Dorsolateral prefrontal cortex (tissue), 120 donors: ENCODE measurements at regions of chr17 and their contacts with region 1.

Region 1: GRCh38 chr17:43576563-43577229 is 30.6 kb upstream of the ETV4 start:
- DNase-seq: peak; percentile 48 to 81 (median 66)
- H3K4me3 ChIP-seq: no peak overlapping the region
- H3K27ac ChIP-seq: no peak overlapping the region
- H3K27me3 ChIP-seq: no peaks in the 10 kb centered on the region
- CTCF ChIP-seq: peak; percentile 82 to 99 (median 96)

Region 2: GRCh38 chr17:43528349-43528987 is 48.2 kb before region 1 on chr17:
- intact Hi-C with region 1: loop called in 1 of 2 experiments (anchors 5 kb)
- DNase-seq: peak in 3 of 10 donors; percentile 44 to 50 (median 46)
- H3K4me3 ChIP-seq: no peak overlapping the region
- H3K27ac ChIP-seq: no peak overlapping the region
- H3K27me3 ChIP-seq: no peaks in the 10 kb centered on the region
- CTCF ChIP-seq: no peak

Region 3: GRCh38 chr17:43540821-43541674 is 35.6 kb before region 1 on chr17:
- intact Hi-C with region 1: no loop called
- DNase-seq: no peak
- H3K4me3 ChIP-seq: no peak overlapping the region
- H3K27ac ChIP-seq: no peak overlapping the region
- H3K27me3 ChIP-seq: no peaks in the 10 kb centered on the region
- CTCF ChIP-seq: no peak

Region 4: DNA sequence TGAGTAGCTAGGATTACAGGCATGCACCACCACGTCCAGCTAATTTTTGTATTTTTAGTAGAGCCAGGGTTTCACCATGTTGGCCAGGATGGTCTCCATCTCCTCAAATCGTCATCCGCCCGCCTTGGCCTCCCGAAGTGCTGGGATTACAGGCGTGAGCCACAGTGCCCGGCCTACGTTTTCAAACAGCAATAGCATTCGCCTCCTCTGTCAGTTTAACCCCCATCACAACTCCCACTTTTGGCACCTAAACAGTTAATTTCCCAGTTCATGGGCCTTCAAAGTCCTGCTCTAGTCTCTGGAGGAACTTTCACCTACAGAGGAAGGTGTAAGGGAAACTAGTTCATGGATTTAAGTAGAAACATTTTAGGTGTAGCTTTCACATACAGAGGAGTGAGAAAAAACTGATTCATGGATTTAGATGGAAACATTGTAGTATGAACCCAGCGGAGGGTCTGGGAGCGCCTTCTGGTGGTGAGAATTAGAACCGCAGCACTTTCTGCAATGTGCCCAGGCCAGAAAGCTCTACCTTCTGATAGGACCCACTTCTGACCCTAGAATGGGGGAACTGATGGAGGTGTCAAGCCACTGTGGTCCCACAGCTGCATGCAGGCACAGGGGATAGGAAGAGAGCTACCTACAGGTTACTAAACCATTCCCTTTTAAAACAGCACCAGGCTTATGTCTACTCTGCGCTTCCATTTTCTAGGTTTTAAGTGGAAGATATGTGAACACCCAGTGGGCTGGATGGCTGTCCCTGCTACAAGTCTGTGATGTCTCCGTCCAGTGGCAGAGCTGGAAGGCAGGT is 97.0 kb after region 1 on chr17:
- intact Hi-C with region 1: loop called (anchors 1 to 2 kb)
- DNase-seq: peak in 9 of 10 donors; percentile 53 to 81 (median 72)
- H3K4me3 ChIP-seq: no peak overlapping the region
- H3K27ac ChIP-seq: no peak overlapping the region
- H3K27me3 ChIP-seq: no peaks in the 10 kb centered on the region
- CTCF ChIP-seq: peak; percentile 80 to 98 (median 92)

Region 5: GRCh38 chr17:43760254-43760852 is 183.7 kb after region 1 on chr17:
- intact Hi-C with region 1: loop called in 1 of 2 experiments (anchors 5 kb)
- DNase-seq: peak; percentile 89 to 97 (median 92)
- H3K4me3 ChIP-seq: no peak overlapping the region
- H3K27ac ChIP-seq: peak overlapping the region in 1 of 59 donors; percentile 53
- H3K27me3 ChIP-seq: peaks cover 0 to 20% (median 9%) of the 10 kb centered on the region in 45 donors
- CTCF ChIP-seq: peak; percentile 88 to 100 (median 99)